ENCODE measurements at regions of chr12 and their contacts with region 1.

Region 1: DNA sequence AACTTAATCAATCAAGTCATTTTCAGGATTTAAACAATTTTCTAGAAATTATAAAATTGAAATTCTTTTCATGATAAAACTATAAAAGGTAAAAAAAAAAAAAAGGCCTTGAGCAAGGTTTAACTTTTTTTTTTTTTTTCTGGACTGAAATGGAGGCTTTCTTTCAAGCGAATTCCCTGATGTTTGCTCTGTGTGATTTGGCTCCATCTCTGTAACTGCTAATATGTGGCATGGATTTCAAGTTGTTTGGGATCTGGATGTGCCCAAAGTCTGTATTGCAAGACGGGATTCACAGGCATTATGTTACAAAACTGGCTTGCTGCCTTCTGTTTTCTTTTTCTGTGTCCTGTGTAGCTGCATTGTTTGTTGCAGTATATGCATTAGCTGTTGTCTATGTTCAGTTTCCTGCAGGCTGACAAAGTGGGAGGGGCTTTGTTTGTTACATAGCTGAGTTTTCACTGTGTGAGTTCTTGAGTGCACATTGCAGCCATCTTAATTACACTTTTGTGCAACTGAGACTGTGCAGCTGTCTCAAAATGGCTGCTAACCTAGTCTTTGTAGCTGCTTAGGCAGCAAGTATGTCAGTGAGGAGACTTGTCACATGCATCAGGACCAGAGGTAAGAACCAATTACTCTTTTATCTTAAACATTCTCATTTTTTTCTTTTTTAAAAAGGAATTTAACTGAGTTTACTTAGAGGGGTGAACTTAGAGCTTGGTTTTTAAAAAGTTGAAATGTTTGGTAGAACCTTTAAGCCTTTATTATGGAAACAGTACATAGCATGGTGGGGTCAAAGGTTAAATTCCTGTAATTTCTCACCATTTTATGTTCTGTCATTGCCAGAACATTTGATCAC is 19.5 kb downstream of the ATF7IP start:
- DNase-seq: peak in 13 of 14 experiments; percentile 17 to 95 (median 43)
- ATAC-seq: peak; percentile 92
- H3K4me3 ChIP-seq: peak overlapping the region; percentile 48
- H3K4me3 Mint-ChIP-seq: peak overlapping the region; percentile 77
- H3K27ac ChIP-seq: peak overlapping the region; percentile 23 to 37
- H3K27ac Mint-ChIP-seq: peak overlapping the region; percentile 91
- H3K4me1 ChIP-seq: peaks cover 26% of the 10 kb centered on the region
- H3K4me1 Mint-ChIP-seq: peaks cover 72% of the 10 kb centered on the region
- H3K27me3 ChIP-seq: no peaks in the 10 kb centered on the region
- H3K27me3 Mint-ChIP-seq: no peaks in the 10 kb centered on the region
- CTCF ChIP-seq: no peak

Region 2: GRCh38 chr12:14257734-14258574 is 127.1 kb before region 1 on chr12:
- CTCF ChIA-PET with region 1: no interaction called
- POLR2A ChIA-PET with region 1: interaction called, 15 read pairs
- intact Hi-C with region 1: no loop called
- DNase-seq: peak; percentile 57 to 95 (median 68)
- ATAC-seq: peak; percentile 54
- H3K4me3 ChIP-seq: peak overlapping the region; percentile 21
- H3K4me3 Mint-ChIP-seq: peak overlapping the region; percentile 83
- H3K27ac ChIP-seq: peak overlapping the region; percentile 68 to 84
- H3K27ac Mint-ChIP-seq: peak overlapping the region; percentile 98
- H3K4me1 ChIP-seq: peaks cover 43% of the 10 kb centered on the region
- H3K4me1 Mint-ChIP-seq: peaks cover 55% of the 10 kb centered on the region
- H3K27me3 ChIP-seq: no peaks in the 10 kb centered on the region
- H3K27me3 Mint-ChIP-seq: no peaks in the 10 kb centered on the region
- CTCF ChIP-seq: no peak

Region 3: DNA sequence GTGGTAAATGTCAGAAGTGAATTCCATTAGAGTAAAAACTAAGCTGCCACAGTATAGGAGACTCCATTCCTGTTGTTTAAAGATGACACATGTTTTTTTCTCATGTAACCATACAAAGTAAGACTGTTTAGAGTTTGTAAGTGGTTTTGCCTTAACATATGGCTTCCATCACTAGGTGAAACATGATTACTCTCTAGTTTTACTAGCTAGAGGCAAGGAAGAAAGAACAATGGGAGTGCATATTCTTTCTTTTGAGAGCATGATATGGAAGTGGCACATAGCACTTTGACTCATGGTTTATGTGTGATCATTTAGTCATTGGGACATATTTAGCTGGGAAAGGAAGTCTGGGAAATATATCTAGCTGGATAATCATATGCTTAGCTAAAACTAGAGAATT is 11.8 kb before region 1 on chr12:
- CTCF ChIA-PET with region 1: interaction called, 16 read pairs
- POLR2A ChIA-PET with region 1: interaction called, 43 read pairs
- intact Hi-C with region 1: loop called in 1 of 2 experiments (anchors 2 kb)
- DNase-seq: no peak
- ATAC-seq: peak; percentile 30
- H3K4me3 ChIP-seq: no peak overlapping the region
- H3K4me3 Mint-ChIP-seq: peak overlapping the region; percentile 36
- H3K27ac ChIP-seq: peak overlapping the region in 1 of 2 donors; percentile 7
- H3K27ac Mint-ChIP-seq: peak overlapping the region; percentile 84
- H3K4me1 ChIP-seq: peaks cover 21% of the 10 kb centered on the region
- H3K4me1 Mint-ChIP-seq: peaks cover 70% of the 10 kb centered on the region
- H3K27me3 ChIP-seq: no peaks in the 10 kb centered on the region
- H3K27me3 Mint-ChIP-seq: no peaks in the 10 kb centered on the region
- CTCF ChIP-seq: no peak

Region 4: GRCh38 chr12:14403711-14404196 is 18.7 kb after region 1 on chr12:
- CTCF ChIA-PET with region 1: interaction called, 3 read pairs
- POLR2A ChIA-PET with region 1: interaction called, 11 read pairs
- intact Hi-C with region 1: loop called in 1 of 2 experiments (anchors 2 kb)
- DNase-seq: peak in 4 of 14 experiments; percentile 16 to 85 (median 80)
- ATAC-seq: peak; percentile 74
- H3K4me3 ChIP-seq: no peak overlapping the region
- H3K4me3 Mint-ChIP-seq: peak overlapping the region; percentile 69
- H3K27ac ChIP-seq: peak overlapping the region in 1 of 2 donors; percentile 55
- H3K27ac Mint-ChIP-seq: peak overlapping the region; percentile 91
- H3K4me1 ChIP-seq: peaks cover 36% of the 10 kb centered on the region
- H3K4me1 Mint-ChIP-seq: peaks cover 77% of the 10 kb centered on the region
- H3K27me3 ChIP-seq: no peaks in the 10 kb centered on the region
- H3K27me3 Mint-ChIP-seq: no peaks in the 10 kb centered on the region
- CTCF ChIP-seq: no peak

Region 5: DNA sequence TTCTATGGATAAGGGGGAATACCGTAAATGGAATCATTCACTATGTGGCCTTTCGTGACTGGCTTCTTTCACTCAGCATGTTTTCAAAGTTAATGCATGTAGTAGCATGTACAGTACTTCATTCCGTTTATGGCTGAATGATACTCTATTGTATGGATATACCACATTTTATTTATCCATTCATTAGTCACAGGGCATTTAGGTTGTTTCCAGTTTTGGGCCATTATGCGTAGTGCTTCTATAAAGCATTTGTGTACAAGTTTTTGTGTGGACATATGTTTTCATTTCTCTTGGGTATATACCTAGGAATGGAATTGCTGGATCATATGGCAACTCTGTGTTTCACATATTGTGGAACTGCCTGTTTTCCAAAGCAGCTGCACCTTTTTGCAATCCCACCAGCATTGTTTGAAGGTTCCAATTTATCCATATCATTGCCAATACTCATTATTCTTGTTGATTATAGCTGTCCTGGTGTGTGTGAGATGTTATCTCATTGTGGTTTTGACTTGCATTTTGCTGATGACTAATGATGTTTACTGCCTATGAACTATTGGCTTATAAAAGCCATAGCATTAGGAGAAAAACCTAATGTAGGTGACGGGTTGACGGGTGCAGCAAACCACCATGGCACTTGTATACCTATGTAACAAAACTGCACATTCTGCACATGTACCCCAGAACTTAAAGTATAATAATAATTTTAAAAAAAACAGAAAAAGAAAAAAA is 26.0 kb after region 1 on chr12:
- CTCF ChIA-PET with region 1: interaction called, 7 read pairs
- POLR2A ChIA-PET with region 1: interaction called, 18 read pairs
- intact Hi-C with region 1: loop called in 1 of 2 experiments (anchors 2 kb)
- DNase-seq: peak in 6 of 14 experiments; percentile 29 to 83 (median 54)
- ATAC-seq: peak; percentile 82
- H3K4me3 ChIP-seq: no peak overlapping the region
- H3K4me3 Mint-ChIP-seq: peak overlapping the region; percentile 3
- H3K27ac ChIP-seq: no peak overlapping the region
- H3K27ac Mint-ChIP-seq: peak overlapping the region; percentile 64
- H3K4me1 ChIP-seq: peaks cover 21% of the 10 kb centered on the region
- H3K4me1 Mint-ChIP-seq: peaks cover 72% of the 10 kb centered on the region
- H3K27me3 ChIP-seq: no peaks in the 10 kb centered on the region
- H3K27me3 Mint-ChIP-seq: no peaks in the 10 kb centered on the region
- CTCF ChIP-seq: no peak

Region 6: GRCh38 chr12:14948672-14949071 is 563.7 kb after region 1 on chr12:
- CTCF ChIA-PET with region 1: no interaction called
- POLR2A ChIA-PET with region 1: no interaction called
- intact Hi-C with region 1: loop called in 1 of 2 experiments (anchors 10 kb)
- DNase-seq: peak in 9 of 14 experiments; percentile 29 to 92 (median 57)
- ATAC-seq: peak; percentile 85
- H3K4me3 ChIP-seq: peak overlapping the region; percentile 34
- H3K4me3 Mint-ChIP-seq: peak overlapping the region; percentile 81
- H3K27ac ChIP-seq: peak overlapping the region; percentile 90 to 95
- H3K27ac Mint-ChIP-seq: peak overlapping the region; percentile 94
- H3K4me1 ChIP-seq: peaks cover 66% of the 10 kb centered on the region
- H3K4me1 Mint-ChIP-seq: peaks cover 92% of the 10 kb centered on the region
- H3K27me3 ChIP-seq: no peaks in the 10 kb centered on the region
- H3K27me3 Mint-ChIP-seq: no peaks in the 10 kb centered on the region
- CTCF ChIP-seq: no peak